ENCODE measurements at regions of chr12 and their contacts with region 1.

Region 1: GRCh38 chr12:4037747-4038312 is 164.6 kb upstream of the PARP11 start:
- DNase-seq: peak; percentile 59
- H3K4me3 ChIP-seq: no peak overlapping the region
- H3K27ac ChIP-seq: no peak overlapping the region
- H3K4me1 ChIP-seq: no peaks in the 10 kb centered on the region
- H3K27me3 ChIP-seq: no peaks in the 10 kb centered on the region
- CTCF ChIP-seq: peak; percentile 55 to 85 (median 80)
- POLR2A ChIP-seq: no peak

Region 2: GRCh38 chr12:3885277-3886094 is 152.3 kb before region 1 on chr12:
- intact Hi-C with region 1: loop called (anchors 5 kb)
- DNase-seq: peak; percentile 20
- H3K4me3 ChIP-seq: no peak overlapping the region
- H3K27ac ChIP-seq: peak overlapping the region; percentile 28 to 43
- H3K4me1 ChIP-seq: no peaks in the 10 kb centered on the region
- H3K27me3 ChIP-seq: no peaks in the 10 kb centered on the region
- CTCF ChIP-seq: peak; percentile 45 to 91 (median 81)
- POLR2A ChIP-seq: no peak

Region 3: DNA sequence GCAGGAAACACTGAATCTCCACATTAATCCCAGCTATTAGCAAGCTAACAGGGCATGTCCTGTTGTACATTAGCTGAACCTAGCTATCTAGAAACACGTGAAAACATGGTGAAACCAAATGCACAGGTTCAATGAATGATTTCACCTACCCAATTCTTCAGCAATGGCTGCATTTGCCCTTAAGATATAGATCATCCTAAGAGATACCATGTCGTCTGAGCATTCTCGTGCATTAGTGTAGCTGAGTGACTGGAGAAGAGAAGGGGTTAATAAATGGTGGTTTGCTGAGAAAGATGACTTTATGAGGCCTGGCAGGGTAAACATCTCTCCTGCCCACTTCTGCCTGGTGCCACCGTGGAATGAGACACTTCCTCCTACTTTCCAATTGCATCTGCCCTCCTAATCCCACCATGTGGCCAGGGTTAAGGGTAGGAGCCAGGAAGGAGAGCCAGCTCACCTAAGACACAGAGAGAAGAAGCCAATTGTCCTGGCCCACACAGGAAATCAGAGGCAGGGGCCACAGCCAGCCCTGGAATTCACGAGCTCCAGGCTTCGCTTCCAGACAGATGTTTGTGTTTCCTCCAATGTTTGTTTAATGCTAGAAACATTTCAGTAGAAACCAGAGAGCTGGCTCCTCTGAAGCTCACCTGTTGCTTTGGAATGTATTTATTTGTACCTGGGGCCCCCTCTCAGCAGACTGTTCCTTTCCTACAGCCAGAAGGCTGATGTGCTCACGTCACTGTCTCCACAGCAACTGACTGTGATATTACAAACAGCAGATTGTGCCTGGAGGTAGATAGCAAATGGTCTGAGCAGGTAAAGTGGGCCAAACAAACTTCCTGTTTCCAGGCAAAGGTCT is 38.6 kb before region 1 on chr12:
- intact Hi-C with region 1: loop called (anchors 2 kb)
- DNase-seq: peak; percentile 78
- H3K4me3 ChIP-seq: no peak overlapping the region
- H3K27ac ChIP-seq: no peak overlapping the region
- H3K4me1 ChIP-seq: no peaks in the 10 kb centered on the region
- H3K27me3 ChIP-seq: no peaks in the 10 kb centered on the region
- CTCF ChIP-seq: no peak
- POLR2A ChIP-seq: no peak

Region 4: DNA sequence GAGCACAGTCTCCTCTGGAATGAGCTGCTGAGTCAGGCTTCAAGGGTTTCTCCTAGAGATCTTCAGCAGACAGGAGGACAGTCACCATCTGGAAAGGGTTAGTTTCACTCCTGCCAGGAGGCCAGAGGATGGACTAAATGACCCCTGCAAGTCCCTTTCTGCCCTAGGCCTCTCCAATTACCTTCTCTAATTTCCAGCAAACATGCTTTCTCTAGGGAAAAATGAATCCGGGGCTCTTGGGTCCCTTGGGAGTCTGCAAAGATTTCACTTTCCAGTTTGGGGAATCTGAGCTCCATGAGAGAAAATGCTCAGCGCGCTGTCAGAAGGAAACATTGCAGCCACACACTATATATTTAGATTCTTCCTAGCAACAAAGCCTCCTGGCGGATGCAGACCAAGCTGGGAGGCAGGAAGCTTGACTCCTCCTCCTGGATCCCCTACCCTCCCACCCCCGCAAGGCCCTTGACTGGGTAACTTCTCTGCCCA is 51.3 kb after region 1 on chr12:
- intact Hi-C with region 1: no loop called
- DNase-seq: no peak
- H3K4me3 ChIP-seq: no peak overlapping the region
- H3K27ac ChIP-seq: no peak overlapping the region
- H3K4me1 ChIP-seq: no peaks in the 10 kb centered on the region
- H3K27me3 ChIP-seq: no peaks in the 10 kb centered on the region
- CTCF ChIP-seq: no peak
- POLR2A ChIP-seq: no peak

Measured in prostate gland (tissue), 2 donors.